ENCODE measurements at regions of chr11 and their contacts with region 1.

Region 1: GRCh38 chr11:117597071-117597470 is 199.9 kb downstream of the DSCAML1 start:
- DNase-seq: peak; percentile 23
- H3K4me3 Mint-ChIP-seq: no peak overlapping the region
- H3K27ac Mint-ChIP-seq: no peak overlapping the region
- H3K4me1 Mint-ChIP-seq: no peaks in the 10 kb centered on the region
- H3K27me3 Mint-ChIP-seq: peaks cover 12% of the 10 kb centered on the region

Region 2: DNA sequence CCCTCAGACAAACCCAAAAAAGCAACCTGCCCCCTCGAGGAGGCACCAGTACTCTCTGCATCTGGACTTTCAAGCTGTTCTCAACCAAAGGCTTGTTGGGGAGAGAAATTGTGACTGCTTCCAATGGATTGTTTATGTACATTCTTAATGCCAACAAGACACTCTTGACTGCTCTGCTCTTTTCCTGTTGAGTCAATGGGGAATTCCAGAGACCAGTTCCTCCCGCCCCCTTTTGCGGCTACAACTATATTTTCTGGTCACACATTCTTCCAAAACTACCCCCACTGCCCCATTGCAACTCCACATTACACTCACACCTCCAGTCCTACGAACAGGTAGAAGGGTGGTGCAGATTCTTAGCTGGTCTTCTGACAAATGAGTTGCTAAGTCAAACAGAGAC is 13.0 kb after region 1 on chr11:
- intact Hi-C with region 1: loop called (anchors 2 kb)
- DNase-seq: peak; percentile 25
- H3K4me3 Mint-ChIP-seq: no peak overlapping the region
- H3K27ac Mint-ChIP-seq: peak overlapping the region; percentile 11
- H3K4me1 Mint-ChIP-seq: peaks cover 39% of the 10 kb centered on the region
- H3K27me3 Mint-ChIP-seq: peaks cover 12% of the 10 kb centered on the region

Region 3: DNA sequence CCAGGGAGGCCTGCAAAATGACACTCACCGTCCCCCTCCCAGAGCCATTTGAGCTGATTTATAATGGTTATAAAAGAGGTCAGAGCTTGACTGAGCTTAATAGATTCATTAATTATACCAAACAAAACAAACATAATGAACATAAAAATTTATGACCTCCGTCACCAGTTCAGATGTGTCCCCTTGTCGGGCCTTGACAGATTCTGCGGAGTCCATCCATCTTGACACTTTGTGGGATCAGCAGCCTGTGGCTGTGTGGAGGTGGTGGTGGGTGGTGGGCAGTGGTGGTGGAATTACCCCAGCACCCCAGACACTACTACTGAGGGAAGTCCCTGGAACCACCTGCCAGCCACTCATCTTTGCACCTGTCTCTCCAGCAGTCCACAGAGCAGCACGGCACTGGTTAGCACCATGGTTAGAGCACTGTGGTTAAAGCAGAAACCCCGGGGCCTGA is 116.5 kb after region 1 on chr11:
- intact Hi-C with region 1: no loop called
- DNase-seq: no peak
- H3K4me3 Mint-ChIP-seq: no peak overlapping the region
- H3K27ac Mint-ChIP-seq: no peak overlapping the region
- H3K4me1 Mint-ChIP-seq: no peaks in the 10 kb centered on the region
- H3K27me3 Mint-ChIP-seq: peaks cover 4% of the 10 kb centered on the region

Measured in activated T-helper 1 cell treated with anti-CD3 and anti-CD28 coated beads, Interleukin-12 subunit alpha, Interleukin-12 subunit beta, Interleukin-2, Interleukin-4 antibody, amounts not matched to agents 30 ng/mL and 10 ng/mL and 1 ng/mL, durations not matched to agents 14 hours and 24 hours and 36 hours (primary cell).